ENCODE measurements at regions of chr14 and their contacts with region 1.

Region 1: DNA sequence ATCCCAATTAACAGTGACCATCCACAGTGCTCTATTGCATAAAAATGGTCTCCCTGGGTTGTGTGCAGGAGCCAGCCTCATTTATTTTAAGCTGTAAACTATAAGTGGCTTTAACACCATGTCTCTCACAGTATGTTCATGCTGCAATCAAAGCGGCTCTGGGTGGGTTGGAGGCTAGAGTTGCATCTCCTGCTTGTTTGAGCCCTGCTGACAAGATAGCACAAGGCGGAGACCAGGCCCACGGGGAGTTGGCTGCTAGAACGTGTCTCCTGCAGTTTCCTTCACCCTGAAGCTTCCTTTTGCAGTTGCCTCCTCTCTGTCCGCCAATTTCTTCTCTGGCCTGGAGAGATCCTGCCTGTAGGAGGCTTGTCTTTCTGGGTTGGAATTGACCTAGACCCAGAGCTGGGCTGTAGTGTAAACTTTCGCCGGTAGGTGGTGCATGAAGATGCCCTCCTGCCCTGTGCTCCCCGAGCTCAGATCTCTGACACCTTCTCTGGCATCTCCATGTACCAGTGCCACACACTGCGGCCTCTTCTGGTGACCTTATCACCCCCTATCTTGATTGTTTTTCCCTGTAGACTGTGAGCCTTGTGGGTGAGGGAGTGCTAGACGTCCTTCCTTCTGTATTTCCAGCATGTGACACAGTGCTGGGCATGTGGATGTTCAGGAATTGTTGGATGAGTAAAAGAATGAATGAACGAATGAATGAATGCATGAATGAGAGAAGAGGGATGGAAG is 10.3 kb downstream of the OTUB2 start:
- DNase-seq: no peak
- H3K4me3 ChIP-seq: no peak overlapping the region
- H3K27me3 ChIP-seq: no peaks in the 10 kb centered on the region
- CTCF ChIP-seq: peak; percentile 88

Region 2: GRCh38 chr14:94026173-94026888 is 10.2 kb before region 1 on chr14 and contains the start of gene OTUB2:
- CTCF ChIA-PET with region 1: interaction called, 16 read pairs
- POLR2A ChIA-PET with region 1: interaction called, 3 read pairs
- DNase-seq: peak; percentile 96
- H3K4me3 ChIP-seq: peak within 1 kb of the TSS; percentile 74
- H3K27me3 ChIP-seq: no peaks in the 10 kb centered on the region; the same call in 1 of the 2 replicates
- CTCF ChIP-seq: no peak
- polyA plus RNA-seq, gene OTUB2: 1.1 and 1.2 TPM in 2 replicates

Region 3: DNA sequence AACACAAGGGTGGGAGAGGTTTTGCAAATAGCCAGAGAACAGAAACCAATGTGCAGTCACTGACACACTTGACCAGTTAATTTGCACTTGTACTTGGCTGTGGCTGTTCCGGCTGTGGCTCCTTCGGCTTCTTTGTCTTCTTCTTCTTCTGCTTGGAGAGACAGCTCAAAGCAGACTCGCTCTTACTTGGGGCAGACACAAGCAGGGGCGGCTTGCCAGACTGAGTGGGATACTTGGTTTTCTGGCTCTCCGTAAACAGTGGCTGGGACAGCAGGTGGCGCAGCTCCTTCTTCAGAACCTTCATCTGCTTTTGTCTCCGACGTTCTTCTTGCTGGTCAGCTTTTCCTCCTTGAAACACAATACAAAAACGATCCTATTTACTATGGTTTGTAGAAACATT is 14.6 kb after region 1 on chr14:
- CTCF ChIA-PET with region 1: interaction called, 16 read pairs
- POLR2A ChIA-PET with region 1: no interaction called
- DNase-seq: no peak
- H3K4me3 ChIP-seq: no peak overlapping the region
- H3K27me3 ChIP-seq: no peaks in the 10 kb centered on the region
- CTCF ChIP-seq: peak; percentile 52

Region 4: GRCh38 chr14:94062344-94062940 is 26.0 kb after region 1 on chr14:
- CTCF ChIA-PET with region 1: interaction called, 13 read pairs
- POLR2A ChIA-PET with region 1: no interaction called
- DNase-seq: no peak
- H3K4me3 ChIP-seq: no peak overlapping the region
- H3K27me3 ChIP-seq: no peaks in the 10 kb centered on the region
- CTCF ChIP-seq: no peak

Region 5: DNA sequence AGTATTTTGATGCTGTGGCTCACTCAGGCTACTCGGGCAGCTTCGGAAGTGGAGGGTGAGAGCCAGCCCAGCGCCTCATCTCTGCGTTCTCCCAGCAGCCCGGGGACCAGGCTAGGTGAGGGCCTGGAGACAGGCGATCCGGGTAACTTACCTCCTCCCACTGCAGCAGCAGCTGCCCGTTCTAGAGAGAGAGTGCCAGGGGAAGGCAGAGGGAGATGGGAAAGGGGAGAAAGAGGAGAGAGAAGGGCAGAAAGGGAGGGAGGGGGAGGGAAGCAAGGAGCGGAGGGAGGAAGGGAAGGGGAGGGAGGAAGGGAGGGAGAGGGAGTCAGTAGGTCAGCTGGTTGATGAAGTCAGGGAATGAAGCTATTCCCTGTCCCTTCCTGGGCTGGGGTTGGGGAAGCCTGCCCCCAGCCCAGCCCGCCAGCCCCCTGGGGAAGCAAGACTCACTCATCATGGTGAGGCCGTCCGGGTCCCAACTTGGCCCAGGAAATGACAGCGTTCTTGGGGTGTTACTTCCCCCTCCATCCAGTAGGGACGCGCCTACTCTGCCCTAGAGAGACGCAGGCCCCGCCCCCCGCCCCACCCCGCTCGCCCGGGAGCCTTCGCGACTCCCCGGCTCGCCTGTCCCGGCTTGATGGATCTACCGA is 92.8 kb after region 1 on chr14 and contains the start of gene IFI27L2:
- CTCF ChIA-PET with region 1: interaction called, 55 read pairs
- POLR2A ChIA-PET with region 1: interaction called, 5 read pairs
- DNase-seq: no peak
- H3K4me3 ChIP-seq: peak within 1 kb of the TSS; percentile 60
- H3K27me3 ChIP-seq: no peaks in the 10 kb centered on the region
- CTCF ChIP-seq: peak; percentile 48
- polyA plus RNA-seq, gene IFI27L2: 122 and 201 TPM in 2 replicates

Region 6: GRCh38 chr14:94180655-94181271 is 144.3 kb after region 1 on chr14:
- CTCF ChIA-PET with region 1: interaction called, 38 read pairs
- POLR2A ChIA-PET with region 1: no interaction called
- DNase-seq: no peak
- H3K4me3 ChIP-seq: no peak overlapping the region
- H3K27me3 ChIP-seq: peaks cover 1% of the 10 kb centered on the region; the same call in 1 of the 2 replicates
- CTCF ChIP-seq: peak; percentile 59